Left ventricle myocardium inferior (tissue), 1 donor: ENCODE measurements at regions of chr10 and their contacts with region 1.

Region 1: DNA sequence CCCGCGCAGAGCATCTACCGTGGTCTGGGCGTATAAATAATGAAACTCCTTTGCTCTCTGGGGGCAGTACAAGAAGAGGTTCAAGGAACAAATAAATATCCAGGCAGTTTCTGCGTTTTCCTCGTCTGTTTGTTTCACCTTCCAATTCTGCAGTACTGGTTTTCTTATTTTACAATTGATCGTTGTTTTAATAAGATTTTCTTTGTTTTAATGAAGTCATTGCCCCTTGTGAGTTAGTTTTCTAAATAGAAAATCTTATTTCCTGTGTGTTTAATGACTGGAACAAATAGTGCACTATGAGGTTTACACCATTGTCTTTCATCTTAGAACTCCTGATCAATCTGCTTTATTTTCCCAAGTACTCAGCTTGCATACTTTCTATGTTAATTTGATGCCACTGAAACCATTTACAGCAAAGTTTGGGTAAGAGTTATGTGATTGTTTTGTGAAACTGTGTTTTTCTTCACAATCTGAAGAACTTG is 1.2 kb downstream of the PLEKHA1 start:
- DNase-seq: no peak
- H3K4me3 ChIP-seq: peak overlapping the region; percentile 92
- H3K27ac ChIP-seq: peak overlapping the region; percentile 99
- H3K4me1 ChIP-seq: peaks cover 90% of the 10 kb centered on the region
- H3K27me3 ChIP-seq: no peaks in the 10 kb centered on the region
- CTCF ChIP-seq: no peak

Region 2: GRCh38 chr10:122163174-122164022 is 212.3 kb before region 1 on chr10:
- intact Hi-C with region 1: no loop called
- DNase-seq: no peak
- H3K4me3 ChIP-seq: peak overlapping the region; percentile 60
- H3K27ac ChIP-seq: peak overlapping the region; percentile 4
- H3K4me1 ChIP-seq: peaks cover 71% of the 10 kb centered on the region
- H3K27me3 ChIP-seq: no peaks in the 10 kb centered on the region
- CTCF ChIP-seq: no peak

Region 3: GRCh38 chr10:122426829-122427228 is 51.1 kb after region 1 on chr10:
- intact Hi-C with region 1: loop called (anchors 2 kb)
- DNase-seq: no peak
- H3K4me3 ChIP-seq: no peak overlapping the region
- H3K27ac ChIP-seq: no peak overlapping the region
- H3K4me1 ChIP-seq: peaks cover 15% of the 10 kb centered on the region
- H3K27me3 ChIP-seq: no peaks in the 10 kb centered on the region
- CTCF ChIP-seq: no peak

Region 4: DNA sequence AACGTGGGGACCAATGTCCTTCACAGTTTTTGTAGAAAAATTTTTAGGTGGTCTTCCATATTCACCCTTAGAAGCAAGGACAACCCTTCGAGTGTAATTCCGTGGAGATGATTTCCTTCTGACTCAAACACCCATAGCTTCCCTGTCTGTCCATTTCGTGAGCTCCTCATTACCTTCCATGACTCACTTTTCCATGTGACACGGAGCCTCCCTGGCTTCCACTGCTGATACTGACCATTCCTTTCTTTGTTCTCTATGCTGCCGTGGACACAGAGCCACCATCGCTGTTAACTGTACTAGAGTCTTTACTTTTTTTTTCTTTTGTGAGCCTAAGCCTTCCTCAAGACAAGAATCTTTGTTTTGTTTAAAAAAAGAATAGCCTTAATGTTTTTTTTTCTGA is 66.2 kb after region 1 on chr10:
- intact Hi-C with region 1: no loop called
- DNase-seq: no peak
- H3K4me3 ChIP-seq: no peak overlapping the region
- H3K27ac ChIP-seq: no peak overlapping the region
- H3K4me1 ChIP-seq: peaks cover 13% of the 10 kb centered on the region
- H3K27me3 ChIP-seq: no peaks in the 10 kb centered on the region
- CTCF ChIP-seq: no peak